Right cardiac atrium (tissue), 5 donors: ENCODE measurements at regions of chr9 and their contacts with region 1.

Region 1: GRCh38 chr9:3912817-3913216 is 387.0 kb upstream of the RFX3 start:
- DNase-seq: no peak
- ATAC-seq: no peak
- H3K4me3 ChIP-seq: no peak overlapping the region
- H3K27ac ChIP-seq: no peak overlapping the region
- H3K4me1 ChIP-seq: no peaks in the 10 kb centered on the region
- H3K27me3 ChIP-seq: no peaks in the 10 kb centered on the region

Region 2: GRCh38 chr9:3783156-3783555 is 129.7 kb before region 1 on chr9:
- intact Hi-C with region 1: loop called in 1 of 4 experiments (anchors 10 kb)
- DNase-seq: no peak
- ATAC-seq: no peak
- H3K4me3 ChIP-seq: no peak overlapping the region
- H3K27ac ChIP-seq: no peak overlapping the region
- H3K4me1 ChIP-seq: no peaks in the 10 kb centered on the region
- H3K27me3 ChIP-seq: no peaks in the 10 kb centered on the region

Region 3: DNA sequence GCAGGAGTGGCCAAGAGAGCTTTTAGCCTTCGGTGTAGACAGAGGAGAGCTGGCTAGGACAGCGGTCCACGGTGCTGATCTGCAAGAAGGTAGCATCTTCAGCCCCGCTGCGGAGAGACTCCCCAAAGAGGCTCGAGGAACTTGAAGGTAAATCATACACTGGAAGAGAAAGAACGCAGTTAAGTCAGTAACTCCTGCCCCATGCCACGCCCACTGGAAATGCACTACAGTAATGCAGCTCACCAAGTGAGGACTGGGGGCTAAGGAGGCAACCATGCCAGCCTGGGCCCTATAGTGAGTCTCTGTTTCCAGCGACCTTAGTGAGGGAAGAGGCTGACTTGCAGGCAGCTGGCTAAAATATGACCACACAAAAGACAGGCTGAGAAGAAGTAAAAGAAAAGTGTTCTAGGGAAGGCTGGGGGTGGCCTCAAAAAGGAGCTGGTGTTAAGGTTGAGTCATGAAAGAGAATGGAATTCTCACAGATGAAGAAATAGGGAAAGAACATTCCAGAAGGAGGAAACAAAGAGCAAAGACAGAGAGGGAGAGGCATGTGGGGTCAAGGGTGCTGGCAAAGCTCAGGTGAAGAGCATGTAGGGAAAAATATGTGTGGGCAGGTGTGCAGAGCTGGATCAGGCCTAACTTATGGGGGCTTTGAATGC is 84.4 kb before region 1 on chr9:
- intact Hi-C with region 1: no loop called
- DNase-seq: no peak
- ATAC-seq: peak in 1 of 2 donors; percentile 36
- H3K4me3 ChIP-seq: no peak overlapping the region
- H3K27ac ChIP-seq: no peak overlapping the region
- H3K4me1 ChIP-seq: no peaks in the 10 kb centered on the region
- H3K27me3 ChIP-seq: no peaks in the 10 kb centered on the region